ENCODE measurements at regions of chr15 and their contacts with region 1.

Region 1: GRCh38 chr15:76973362-76973743 is 21.6 kb upstream of the PSTPIP1 start:
- DNase-seq: peak; percentile 50 to 67 (median 61)
- H3K4me3 ChIP-seq: no peak overlapping the region
- H3K4me3 Mint-ChIP-seq: no peak overlapping the region
- H3K27ac ChIP-seq: no peak overlapping the region
- H3K27ac Mint-ChIP-seq: peak overlapping the region in 2 of 7 donors; percentile 29 to 41
- H3K4me1 ChIP-seq: no peaks in the 10 kb centered on the region
- H3K4me1 Mint-ChIP-seq: peaks cover 4 to 13% (median 8%) of the 10 kb centered on the region in 4 donors
- H3K27me3 ChIP-seq: no peaks in the 10 kb centered on the region
- H3K27me3 Mint-ChIP-seq: no peaks in the 10 kb centered on the region

Region 2: DNA sequence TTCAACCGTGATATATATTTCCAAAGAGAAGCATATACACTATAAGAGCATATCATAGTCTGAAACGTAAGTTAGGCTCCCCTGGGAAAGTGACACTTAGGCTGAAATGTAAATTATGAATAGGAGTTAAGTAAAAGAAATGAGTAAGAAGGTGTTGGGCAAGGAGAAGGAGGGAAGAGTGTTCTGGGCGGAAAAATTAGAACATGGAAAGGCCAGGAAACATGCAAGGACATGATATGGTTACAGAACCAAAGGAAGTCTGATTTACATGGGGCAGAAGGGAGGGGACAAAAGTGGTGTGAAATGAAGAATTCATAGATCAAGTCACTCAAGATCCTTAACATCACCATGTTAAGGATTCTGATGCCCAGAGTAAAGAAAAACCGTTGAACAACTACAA is 143.4 kb before region 1 on chr15:
- CTCF ChIA-PET with region 1: no interaction called
- POLR2A ChIA-PET with region 1: no interaction called
- intact Hi-C with region 1: no loop called
- DNase-seq: no peak
- H3K4me3 ChIP-seq: no peak overlapping the region
- H3K4me3 Mint-ChIP-seq: no peak overlapping the region
- H3K27ac ChIP-seq: no peak overlapping the region
- H3K27ac Mint-ChIP-seq: no peak overlapping the region
- H3K4me1 ChIP-seq: no peaks in the 10 kb centered on the region
- H3K4me1 Mint-ChIP-seq: peaks cover 3 to 13% (median 11%) of the 10 kb centered on the region in 4 donors
- H3K27me3 ChIP-seq: no peaks in the 10 kb centered on the region
- H3K27me3 Mint-ChIP-seq: no peaks in the 10 kb centered on the region

Region 3: DNA sequence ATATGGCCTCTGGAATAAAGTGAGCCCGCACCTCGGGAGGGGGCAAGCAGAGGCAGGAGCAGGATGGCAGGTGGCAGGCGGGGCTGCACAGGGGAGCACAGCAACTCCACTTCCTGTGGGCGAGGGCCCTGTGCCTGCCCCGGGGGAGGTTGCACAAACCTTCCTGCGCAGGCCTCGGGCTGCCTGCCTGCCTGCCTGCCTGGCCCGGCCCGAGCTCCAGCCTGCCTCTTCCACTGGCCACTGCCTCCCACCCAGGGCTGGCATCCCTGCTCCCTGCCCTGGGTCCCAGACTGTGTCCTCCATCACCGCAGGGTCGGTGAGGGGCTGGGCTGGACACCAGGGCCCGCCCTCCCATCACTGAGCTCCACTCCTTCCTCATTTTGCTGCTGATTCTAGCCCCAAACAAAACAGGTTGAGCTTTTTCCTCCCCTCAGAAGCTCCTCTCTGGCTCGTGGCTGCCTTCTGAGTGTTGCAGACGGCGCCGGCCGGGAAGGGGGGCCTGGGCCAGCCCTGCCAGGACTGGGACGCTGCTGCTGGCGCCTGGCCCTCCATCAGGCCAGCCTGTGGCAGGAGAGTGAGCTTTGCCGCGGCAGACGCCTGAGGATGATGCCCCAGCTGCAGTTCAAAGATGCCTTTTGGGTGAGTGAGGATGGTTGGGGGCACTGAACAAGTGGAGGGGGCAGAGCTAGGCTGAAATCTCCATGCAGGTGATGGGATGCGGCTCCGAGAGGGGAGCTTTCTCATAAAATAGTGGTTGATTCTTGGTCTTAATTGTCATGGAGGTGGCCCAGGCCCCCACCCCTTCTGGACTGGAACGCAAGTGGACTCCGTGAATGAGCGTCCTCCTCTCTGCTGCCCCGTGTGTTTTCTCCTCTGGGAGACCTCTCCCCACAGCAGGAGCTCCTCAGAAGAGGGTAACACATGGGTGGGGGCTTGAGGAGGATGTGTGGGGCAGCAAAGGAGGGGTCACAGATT is 21.9 kb after region 1 on chr15 and contains the start of gene PSTPIP1:
- CTCF ChIA-PET with region 1: interaction called, 55 read pairs
- POLR2A ChIA-PET with region 1: interaction called, 17 read pairs
- intact Hi-C with region 1: loop called (anchors 2 kb)
- DNase-seq: peak; percentile 65 to 76 (median 74)
- H3K4me3 ChIP-seq: peak within 1 kb of the TSS; percentile 94 to 96
- H3K4me3 Mint-ChIP-seq: peak within 1 kb of the TSS; percentile 94 to 97 (median 96)
- H3K27ac ChIP-seq: peak within 1 kb of the TSS; percentile 79
- H3K27ac Mint-ChIP-seq: peak within 1 kb of the TSS; percentile 92 to 97 (median 96)
- H3K4me1 ChIP-seq: peaks cover 56% of the 10 kb centered on the region
- H3K4me1 Mint-ChIP-seq: peaks cover 38 to 92% (median 52%) of the 10 kb centered on the region in 4 donors
- H3K27me3 ChIP-seq: no peaks in the 10 kb centered on the region
- H3K27me3 Mint-ChIP-seq: no peaks in the 10 kb centered on the region
- total RNA-seq, gene PSTPIP1: 225 to 233 TPM

Region 4: DNA sequence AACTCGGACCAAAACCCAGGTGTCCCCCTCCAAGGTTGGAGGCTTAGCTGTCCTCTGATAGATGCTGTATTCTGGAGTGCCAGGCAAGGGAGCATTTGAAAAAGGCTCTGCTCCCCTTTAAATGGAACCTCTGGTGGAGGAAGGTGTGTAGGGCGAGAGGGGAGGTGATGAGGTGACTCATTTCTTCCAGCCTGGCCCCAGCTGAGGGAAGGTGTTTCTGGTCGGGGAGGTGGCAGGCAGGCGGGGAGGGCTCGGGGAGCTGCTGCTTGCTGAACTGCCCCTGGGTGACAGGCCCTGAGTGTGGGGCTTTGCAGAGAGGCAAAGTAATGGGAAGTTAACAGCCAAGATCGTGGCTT is 40.4 kb after region 1 on chr15:
- CTCF ChIA-PET with region 1: interaction called, 13 read pairs
- POLR2A ChIA-PET with region 1: interaction called, 7 read pairs
- intact Hi-C with region 1: no loop called
- DNase-seq: peak; percentile 77 to 97 (median 80)
- H3K4me3 ChIP-seq: peak overlapping the region; percentile 33 to 47
- H3K4me3 Mint-ChIP-seq: peak overlapping the region; percentile 74 to 94 (median 83)
- H3K27ac ChIP-seq: peak overlapping the region; percentile 67
- H3K27ac Mint-ChIP-seq: peak overlapping the region; percentile 82 to 100 (median 95)
- H3K4me1 ChIP-seq: peaks cover 99% of the 10 kb centered on the region
- H3K4me1 Mint-ChIP-seq: peaks cover 52 to 98% (median 74%) of the 10 kb centered on the region in 4 donors
- H3K27me3 ChIP-seq: no peaks in the 10 kb centered on the region
- H3K27me3 Mint-ChIP-seq: peaks cover 0 to 2% of the 10 kb centered on the region in 2 donors

Region 5: GRCh38 chr15:77031376-77032050 is 58.2 kb after region 1 on chr15:
- CTCF ChIA-PET with region 1: interaction called, 17 read pairs
- POLR2A ChIA-PET with region 1: no interaction called
- intact Hi-C with region 1: no loop called
- DNase-seq: no peak
- H3K4me3 ChIP-seq: no peak overlapping the region
- H3K4me3 Mint-ChIP-seq: no peak overlapping the region
- H3K27ac ChIP-seq: no peak overlapping the region
- H3K27ac Mint-ChIP-seq: peak overlapping the region in 5 of 7 donors; percentile 62 to 91 (median 85)
- H3K4me1 ChIP-seq: no peaks in the 10 kb centered on the region
- H3K4me1 Mint-ChIP-seq: peaks cover 0 to 4% (median 0%) of the 10 kb centered on the region in 4 donors
- H3K27me3 ChIP-seq: no peaks in the 10 kb centered on the region
- H3K27me3 Mint-ChIP-seq: no peaks in the 10 kb centered on the region

Region 6: GRCh38 chr15:77496710-77497103 is 523.4 kb after region 1 on chr15:
- CTCF ChIA-PET with region 1: interaction called, 27 read pairs
- POLR2A ChIA-PET with region 1: no interaction called
- intact Hi-C with region 1: no loop called
- DNase-seq: peak; percentile 51 to 66 (median 60)
- H3K4me3 ChIP-seq: no peak overlapping the region
- H3K4me3 Mint-ChIP-seq: no peak overlapping the region
- H3K27ac ChIP-seq: no peak overlapping the region
- H3K27ac Mint-ChIP-seq: peak overlapping the region in 1 of 7 donors; percentile 31
- H3K4me1 ChIP-seq: peaks cover 9% of the 10 kb centered on the region
- H3K4me1 Mint-ChIP-seq: peaks cover 9 to 17% (median 16%) of the 10 kb centered on the region in 4 donors
- H3K27me3 ChIP-seq: no peaks in the 10 kb centered on the region
- H3K27me3 Mint-ChIP-seq: no peaks in the 10 kb centered on the region

Measured in CD4-positive, alpha-beta memory T cell (primary cell).